HCT116 (cell line): ENCODE measurements at regions of chr4 and their contacts with region 1.

Region 1: GRCh38 chr4:43587758-43588157 is 695.2 kb downstream of the GRXCR1 start:
- DNase-seq: no peak
- ATAC-seq: no peak
- H3K4me3 ChIP-seq: no peak overlapping the region
- H3K27ac ChIP-seq: no peak overlapping the region
- H3K4me1 ChIP-seq: no peaks in the 10 kb centered on the region
- H3K27me3 ChIP-seq: no peaks in the 10 kb centered on the region
- CTCF ChIP-seq: no peak
- POLR2A ChIP-seq: no peak
- RAD21 ChIP-seq: no peak

Region 2: GRCh38 chr4:42985976-42986375 is 601.8 kb before region 1 on chr4:
- CTCF ChIA-PET with region 1: no interaction called
- POLR2A ChIA-PET with region 1: no interaction called
- RAD21 ChIA-PET with region 1: no interaction called
- intact Hi-C with region 1: loop called (anchors 5 kb)
- DNase-seq: no peak
- ATAC-seq: no peak
- H3K4me3 ChIP-seq: no peak overlapping the region
- H3K27ac ChIP-seq: no peak overlapping the region
- H3K4me1 ChIP-seq: no peaks in the 10 kb centered on the region
- H3K27me3 ChIP-seq: no peaks in the 10 kb centered on the region
- CTCF ChIP-seq: no peak
- POLR2A ChIP-seq: no peak
- RAD21 ChIP-seq: no peak

Region 3: GRCh38 chr4:44118971-44119680 is 531.4 kb after region 1 on chr4:
- CTCF ChIA-PET with region 1: no interaction called
- POLR2A ChIA-PET with region 1: no interaction called
- RAD21 ChIA-PET with region 1: no interaction called
- intact Hi-C with region 1: no loop called
- DNase-seq: no peak
- ATAC-seq: no peak
- H3K4me3 ChIP-seq: no peak overlapping the region
- H3K27ac ChIP-seq: no peak overlapping the region
- H3K4me1 ChIP-seq: no peaks in the 10 kb centered on the region
- H3K27me3 ChIP-seq: no peaks in the 10 kb centered on the region
- CTCF ChIP-seq: no peak
- POLR2A ChIP-seq: no peak
- RAD21 ChIP-seq: no peak

Region 4: GRCh38 chr4:45033676-45034419 is 1446.1 kb after region 1 on chr4:
- CTCF ChIA-PET with region 1: no interaction called
- POLR2A ChIA-PET with region 1: no interaction called
- RAD21 ChIA-PET with region 1: no interaction called
- intact Hi-C with region 1: no loop called
- DNase-seq: no peak
- ATAC-seq: no peak
- H3K4me3 ChIP-seq: no peak overlapping the region
- H3K27ac ChIP-seq: no peak overlapping the region
- H3K4me1 ChIP-seq: no peaks in the 10 kb centered on the region
- H3K27me3 ChIP-seq: no peaks in the 10 kb centered on the region
- CTCF ChIP-seq: no peak
- POLR2A ChIP-seq: no peak
- RAD21 ChIP-seq: no peak